Activated CD8-positive, alpha-beta T cell treated with anti-CD3 and anti-CD28 coated beads, Interleukin-2, amount 10 ng/mL, durations not matched to agents 7 days and 5 days (primary cell): ENCODE measurements at regions of chr7 and their contacts with region 1.

Region 1: GRCh38 chr7:130410868-130411541 is 29.8 kb downstream of the CEP41 start:
- DNase-seq: no peak
- ATAC-seq: no peak
- H3K4me3 Mint-ChIP-seq: no peak overlapping the region
- H3K27ac Mint-ChIP-seq: no peak overlapping the region
- H3K4me1 Mint-ChIP-seq: peaks cover 32% of the 10 kb centered on the region
- H3K27me3 Mint-ChIP-seq: no peaks in the 10 kb centered on the region

Region 2: GRCh38 chr7:129719980-129720732 is 690.8 kb before region 1 on chr7:
- CTCF ChIA-PET with region 1: no interaction called
- POLR2A ChIA-PET with region 1: no interaction called
- DNase-seq: no peak
- ATAC-seq: no peak
- H3K4me3 Mint-ChIP-seq: no peak overlapping the region
- H3K27ac Mint-ChIP-seq: no peak overlapping the region
- H3K4me1 Mint-ChIP-seq: peaks cover 2% of the 10 kb centered on the region
- H3K27me3 Mint-ChIP-seq: no peaks in the 10 kb centered on the region

Region 3: GRCh38 chr7:130394421-130395195 is 16.4 kb before region 1 on chr7:
- CTCF ChIA-PET with region 1: interaction called, 11 read pairs
- POLR2A ChIA-PET with region 1: no interaction called
- DNase-seq: peak; percentile 79
- ATAC-seq: peak; percentile 97
- H3K4me3 Mint-ChIP-seq: peak overlapping the region; percentile 70
- H3K27ac Mint-ChIP-seq: peak overlapping the region; percentile 94
- H3K4me1 Mint-ChIP-seq: peaks cover 44% of the 10 kb centered on the region
- H3K27me3 Mint-ChIP-seq: no peaks in the 10 kb centered on the region